ENCODE measurements at regions of chr16 and their contacts with region 1.

Region 1: GRCh38 chr16:50024684-50025536 is at the start of gene CNEP1R1:
- DNase-seq: peak; percentile 87 to 95 (median 94)
- H3K4me3 ChIP-seq: peak within 1 kb of the TSS; percentile 71 to 100 (median 99)
- H3K27ac ChIP-seq: peak within 1 kb of the TSS in 55 of 59 donors; percentile 27 to 93 (median 81)
- H3K27me3 ChIP-seq: no peaks in the 10 kb centered on the region
- CTCF ChIP-seq: peak; percentile 97 to 100 (median 100)
- total RNA-seq, gene CNEP1R1: 16.8 to 35.7 (median 24.8) TPM

Region 2: DNA sequence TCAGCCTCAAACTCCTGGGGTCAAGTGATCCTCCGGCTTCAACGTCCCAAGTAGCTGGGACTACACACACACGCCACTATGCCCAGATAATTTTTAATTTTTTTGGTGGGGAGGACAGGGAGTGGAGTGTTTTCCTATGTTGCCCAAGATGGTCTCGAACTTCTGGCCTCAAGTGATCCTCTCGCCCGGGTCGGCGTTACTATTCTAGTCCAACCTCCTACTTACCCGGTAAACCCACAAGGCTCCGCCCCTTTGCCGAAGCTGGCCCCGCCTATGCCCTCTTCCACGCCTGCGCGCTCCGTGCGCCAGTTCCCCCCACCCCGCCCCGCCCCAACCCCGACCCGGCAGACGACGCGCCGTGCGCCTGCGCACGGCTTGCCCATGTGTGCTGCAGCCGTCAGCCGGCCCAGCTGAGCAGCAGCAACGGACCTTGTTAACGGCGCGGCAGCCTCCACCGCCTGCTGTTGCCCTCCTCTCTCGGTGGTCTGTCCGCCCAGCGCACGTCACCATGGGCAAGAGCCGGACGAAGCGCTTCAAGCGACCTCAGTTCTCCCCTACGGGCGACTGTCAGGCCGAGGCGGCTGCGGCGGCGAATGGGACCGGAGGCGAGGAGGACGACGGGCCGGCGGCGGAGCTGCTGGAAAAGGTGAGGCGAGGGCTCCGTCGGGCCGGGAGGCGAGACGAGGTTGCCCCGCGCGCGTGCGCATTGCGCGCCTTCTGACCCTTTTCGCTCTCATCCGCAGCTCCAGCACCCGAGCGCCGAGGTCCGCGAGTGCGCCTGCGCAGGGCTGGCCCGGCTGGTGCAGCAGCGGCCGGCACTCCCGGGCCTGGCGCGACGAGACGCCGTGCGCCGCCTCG is 40.9 kb after region 1 on chr16 and contains the start of gene HEATR3:
- intact Hi-C with region 1: loop called (anchors 1 to 2 kb)
- DNase-seq: peak; percentile 82 to 94 (median 90)
- H3K4me3 ChIP-seq: peak within 1 kb of the TSS; percentile 67 to 100 (median 97)
- H3K27ac ChIP-seq: peak within 1 kb of the TSS; percentile 68 to 100 (median 98)
- H3K27me3 ChIP-seq: no peaks in the 10 kb centered on the region
- CTCF ChIP-seq: peak in 26 of 56 donors; percentile 2 to 40 (median 16)
- total RNA-seq, gene HEATR3: 11.3 to 36.1 (median 20.5) TPM

Region 3: GRCh38 chr16:50152807-50153452 is 128.0 kb after region 1 on chr16 and contains the start of gene TENT4B:
- intact Hi-C with region 1: loop called (anchors 2 to 5 kb)
- DNase-seq: peak; percentile 67 to 90 (median 79)
- H3K4me3 ChIP-seq: peak within 1 kb of the TSS; percentile 78 to 97 (median 90)
- H3K27ac ChIP-seq: peak within 1 kb of the TSS; percentile 80 to 98 (median 94)
- H3K27me3 ChIP-seq: no peaks in the 10 kb centered on the region
- CTCF ChIP-seq: peak in 9 of 56 donors; percentile 6 to 42 (median 10)
- total RNA-seq, gene TENT4B: 9.9 to 37.1 (median 18.3) TPM

Region 4: GRCh38 chr16:50354629-50355456 is 329.9 kb after region 1 on chr16:
- intact Hi-C with region 1: loop called (anchors 5 to 10 kb)
- DNase-seq: no peak
- H3K4me3 ChIP-seq: no peak overlapping the region
- H3K27ac ChIP-seq: no peak overlapping the region
- H3K27me3 ChIP-seq: no peaks in the 10 kb centered on the region
- CTCF ChIP-seq: peak in 55 of 56 donors; percentile 20 to 81 (median 57)